ENCODE measurements at regions of chr18 and their contacts with region 1.

Region 1: GRCh38 chr18:35005963-35006577 is 35.1 kb upstream of the MAPRE2 start:
- DNase-seq: no peak
- ATAC-seq: peak; percentile 82 to 95 (median 95)
- H3K4me3 ChIP-seq: no peak overlapping the region
- H3K27ac ChIP-seq: no peak overlapping the region
- H3K4me1 ChIP-seq: peaks cover 0 to 3% (median 0%) of the 10 kb centered on the region in 3 donors
- H3K27me3 ChIP-seq: no peaks in the 10 kb centered on the region
- CTCF ChIP-seq: peak in 2 of 4 donors; percentile 50 to 53

Region 2: GRCh38 chr18:35132021-35132902 is 126.2 kb after region 1 on chr18:
- intact Hi-C with region 1: loop called in 1 of 3 experiments (anchors 10 kb)
- DNase-seq: no peak
- ATAC-seq: peak in 3 of 4 donors; percentile 57 to 66 (median 64)
- H3K4me3 ChIP-seq: no peak overlapping the region
- H3K27ac ChIP-seq: peak overlapping the region in 2 of 4 donors; percentile 6 to 37
- H3K4me1 ChIP-seq: no peaks in the 10 kb centered on the region
- H3K27me3 ChIP-seq: no peaks in the 10 kb centered on the region
- CTCF ChIP-seq: no peak

Region 3: GRCh38 chr18:35143622-35144596 is 137.8 kb after region 1 on chr18:
- intact Hi-C with region 1: loop called in 2 of 3 experiments (anchors 5 to 10 kb)
- DNase-seq: peak in 4 of 6 donors; percentile 49 to 68 (median 60)
- ATAC-seq: peak; percentile 95 to 100 (median 98)
- H3K4me3 ChIP-seq: no peak overlapping the region
- H3K27ac ChIP-seq: peak overlapping the region in 2 of 4 donors; percentile 5 to 37
- H3K4me1 ChIP-seq: peaks cover 0 to 8% (median 5%) of the 10 kb centered on the region in 3 donors
- H3K27me3 ChIP-seq: no peaks in the 10 kb centered on the region
- CTCF ChIP-seq: peak; percentile 15 to 71 (median 64)

Region 4: DNA sequence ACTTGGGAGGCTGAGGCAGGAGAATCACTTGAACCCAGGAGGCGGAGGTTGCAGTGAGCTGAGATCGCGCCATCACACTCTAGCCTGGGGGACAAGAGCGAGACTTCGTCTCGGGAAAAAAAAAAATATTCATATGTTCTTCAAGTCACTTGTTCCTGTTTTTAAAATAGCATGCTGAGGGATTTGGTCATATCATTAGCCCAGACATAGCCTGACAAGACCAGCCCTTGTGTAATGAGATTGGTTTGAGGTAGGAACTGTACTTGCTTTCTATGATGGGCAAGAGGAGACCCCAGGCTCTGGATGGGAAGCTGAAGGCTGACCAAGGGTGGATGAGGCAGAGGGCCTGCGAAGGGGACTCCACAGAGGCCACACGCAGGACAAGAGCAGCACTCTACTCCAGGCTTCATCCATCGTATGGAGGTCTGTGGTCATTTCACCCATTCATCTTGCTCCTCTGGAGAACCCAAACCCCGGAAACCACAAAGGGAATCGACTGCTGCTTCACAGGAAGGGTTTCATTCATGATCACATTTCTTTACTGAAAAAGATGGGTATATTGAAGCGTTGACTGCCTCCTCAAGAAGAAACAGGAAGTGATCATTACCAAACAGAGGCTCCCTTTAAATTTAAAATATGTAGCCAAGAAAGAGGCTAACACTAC is 147.7 kb after region 1 on chr18:
- intact Hi-C with region 1: loop called in 1 of 3 experiments (anchors 5 kb)
- DNase-seq: no peak
- ATAC-seq: peak in 1 of 4 donors; percentile 12
- H3K4me3 ChIP-seq: no peak overlapping the region
- H3K27ac ChIP-seq: no peak overlapping the region
- H3K4me1 ChIP-seq: peaks cover 0 to 9% (median 0%) of the 10 kb centered on the region in 3 donors
- H3K27me3 ChIP-seq: no peaks in the 10 kb centered on the region
- CTCF ChIP-seq: no peak

Region 5: DNA sequence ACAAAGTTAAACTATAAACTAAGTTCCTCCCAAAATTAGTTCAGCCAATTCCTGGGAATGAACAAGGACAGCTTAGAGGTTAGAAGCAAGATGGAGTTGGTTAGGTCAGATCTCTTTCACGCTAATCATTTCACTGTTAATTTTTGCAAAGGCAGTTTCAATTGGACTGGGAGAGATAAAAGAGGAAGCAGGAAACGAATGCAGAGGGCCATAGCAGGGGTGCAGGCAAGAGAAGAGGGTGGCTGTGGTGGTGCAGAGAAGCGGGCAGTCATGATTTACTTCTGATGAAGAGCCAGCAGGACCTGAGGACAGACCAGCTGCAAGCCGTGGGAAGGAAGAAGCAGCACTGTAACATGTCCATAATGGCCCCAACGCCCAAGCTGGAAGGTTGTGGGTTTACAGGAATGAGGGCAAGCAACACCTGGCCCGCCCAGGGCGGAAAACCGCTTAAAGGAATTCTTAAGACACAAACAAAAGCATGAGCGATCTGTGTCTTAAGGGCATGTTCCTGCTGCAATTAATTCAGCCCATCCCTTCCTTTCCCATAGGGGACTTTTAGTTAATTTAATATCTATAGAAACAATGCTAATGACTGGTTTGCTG is 962.3 kb after region 1 on chr18:
- intact Hi-C with region 1: no loop called
- DNase-seq: no peak
- ATAC-seq: no peak
- H3K4me3 ChIP-seq: no peak overlapping the region
- H3K27ac ChIP-seq: no peak overlapping the region
- H3K4me1 ChIP-seq: peaks cover 0 to 2% (median 1%) of the 10 kb centered on the region in 3 donors
- H3K27me3 ChIP-seq: no peaks in the 10 kb centered on the region
- CTCF ChIP-seq: no peak